ENCODE measurements at regions of chr2 and their contacts with region 1.

Region 1: GRCh38 chr2:81043681-81044080 is 739.1 kb upstream of the LRRTM1 start:
- DNase-seq: no peak
- H3K4me3 ChIP-seq: no peak overlapping the region
- H3K27ac ChIP-seq: no peak overlapping the region
- H3K4me1 ChIP-seq: no peaks in the 10 kb centered on the region
- H3K27me3 ChIP-seq: no peaks in the 10 kb centered on the region
- CTCF ChIP-seq: no peak
- POLR2A ChIP-seq: no peak

Region 2: GRCh38 chr2:81158505-81158904 is 114.8 kb after region 1 on chr2:
- intact Hi-C with region 1: loop called (anchors 10 kb)
- DNase-seq: no peak
- H3K4me3 ChIP-seq: no peak overlapping the region
- H3K27ac ChIP-seq: no peak overlapping the region
- H3K4me1 ChIP-seq: no peaks in the 10 kb centered on the region
- H3K27me3 ChIP-seq: no peaks in the 10 kb centered on the region
- CTCF ChIP-seq: no peak
- POLR2A ChIP-seq: no peak

Measured in prostate gland (tissue), 2 donors.